ENCODE measurements at regions of chr3 and their contacts with region 1.

Region 1: GRCh38 chr3:97971677-97972567 is at the start of gene RIOX2:
- DNase-seq: peak; percentile 80
- H3K4me3 ChIP-seq: peak within 1 kb of the TSS; percentile 77
- H3K27ac ChIP-seq: peak within 1 kb of the TSS; percentile 80
- H3K4me1 ChIP-seq: peaks cover 4% of the 10 kb centered on the region
- H3K27me3 ChIP-seq: no peaks in the 10 kb centered on the region
- CTCF ChIP-seq: no peak
- total RNA-seq, gene RIOX2: 17.6 to 21.9 TPM

Region 2: DNA sequence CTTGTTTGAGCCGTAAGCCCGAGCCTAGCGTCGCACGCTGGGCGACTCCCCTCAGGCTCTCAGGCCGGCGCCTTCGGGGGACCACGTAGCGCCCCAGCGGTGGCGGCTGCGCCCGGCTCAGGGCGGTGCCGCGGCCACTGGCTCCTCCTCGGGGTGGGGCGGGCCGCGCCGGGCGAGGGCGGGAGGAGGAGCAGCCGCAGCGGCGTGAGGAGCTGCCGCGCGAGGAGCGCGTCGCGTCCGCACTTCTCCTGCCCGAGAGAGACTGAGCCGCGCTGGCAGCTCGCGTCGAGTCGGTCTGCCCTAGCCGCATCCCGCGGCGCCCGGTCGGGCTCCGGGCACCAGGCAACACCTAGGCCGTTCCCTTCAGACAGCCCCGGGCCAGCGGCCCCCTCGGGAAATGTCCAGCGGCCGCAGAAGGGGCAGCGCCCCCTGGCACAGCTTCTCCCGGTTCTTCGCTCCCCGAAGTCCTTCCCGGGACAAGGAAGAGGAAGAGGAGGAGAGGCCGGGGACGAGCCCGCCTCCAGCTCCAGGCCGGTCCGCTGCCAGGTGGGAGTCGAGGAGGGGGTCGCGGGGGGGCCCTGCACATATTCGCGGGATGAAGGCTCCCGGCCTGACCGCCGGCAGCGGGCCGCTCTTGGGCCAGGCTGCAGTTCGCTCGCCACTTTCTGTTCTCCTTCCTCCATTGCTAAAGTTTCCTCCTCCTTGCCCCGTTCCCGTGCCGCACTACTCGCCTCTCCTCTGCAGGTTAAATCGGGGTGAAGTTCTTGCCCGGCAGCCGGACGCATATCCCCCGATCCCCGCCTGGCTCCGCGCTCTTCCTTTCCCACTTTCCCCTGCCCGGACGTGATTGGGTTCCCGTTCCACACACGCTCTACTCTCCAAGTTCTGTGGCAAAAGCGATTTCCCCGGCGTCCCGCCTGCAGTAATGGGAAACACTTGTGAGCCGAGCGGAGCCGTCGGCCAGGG is 149.8 kb before region 1 on chr3 and contains the start of gene CRYBG3:
- intact Hi-C with region 1: loop called (anchors 10 kb)
- DNase-seq: peak; percentile 86
- H3K4me3 ChIP-seq: peak within 1 kb of the TSS; percentile 88
- H3K27ac ChIP-seq: peak within 1 kb of the TSS; percentile 91
- H3K4me1 ChIP-seq: no peaks in the 10 kb centered on the region
- H3K27me3 ChIP-seq: no peaks in the 10 kb centered on the region
- CTCF ChIP-seq: peak; percentile 15
- total RNA-seq, gene CRYBG3: 15.7 to 22.2 TPM

Measured in colonic mucosa (tissue), 4 donors.